Activated CD4-positive, alpha-beta memory T cell treated with anti-CD3 and anti-CD28 coated beads for 36 hours (primary cell): ENCODE measurements at regions of chr18 and their contacts with region 1.

Region 1: GRCh38 chr18:23452728-23453679 is at the start of gene RIOK3:
- DNase-seq: peak; percentile 97
- H3K4me3 Mint-ChIP-seq: peak within 1 kb of the TSS; percentile 98
- H3K27ac Mint-ChIP-seq: peak within 1 kb of the TSS; percentile 88
- H3K4me1 Mint-ChIP-seq: peaks cover 39% of the 10 kb centered on the region
- H3K27me3 Mint-ChIP-seq: peaks cover 2% of the 10 kb centered on the region
- total RNA-seq, gene RIOK3: 51.0 to 55.8 TPM

Region 2: DNA sequence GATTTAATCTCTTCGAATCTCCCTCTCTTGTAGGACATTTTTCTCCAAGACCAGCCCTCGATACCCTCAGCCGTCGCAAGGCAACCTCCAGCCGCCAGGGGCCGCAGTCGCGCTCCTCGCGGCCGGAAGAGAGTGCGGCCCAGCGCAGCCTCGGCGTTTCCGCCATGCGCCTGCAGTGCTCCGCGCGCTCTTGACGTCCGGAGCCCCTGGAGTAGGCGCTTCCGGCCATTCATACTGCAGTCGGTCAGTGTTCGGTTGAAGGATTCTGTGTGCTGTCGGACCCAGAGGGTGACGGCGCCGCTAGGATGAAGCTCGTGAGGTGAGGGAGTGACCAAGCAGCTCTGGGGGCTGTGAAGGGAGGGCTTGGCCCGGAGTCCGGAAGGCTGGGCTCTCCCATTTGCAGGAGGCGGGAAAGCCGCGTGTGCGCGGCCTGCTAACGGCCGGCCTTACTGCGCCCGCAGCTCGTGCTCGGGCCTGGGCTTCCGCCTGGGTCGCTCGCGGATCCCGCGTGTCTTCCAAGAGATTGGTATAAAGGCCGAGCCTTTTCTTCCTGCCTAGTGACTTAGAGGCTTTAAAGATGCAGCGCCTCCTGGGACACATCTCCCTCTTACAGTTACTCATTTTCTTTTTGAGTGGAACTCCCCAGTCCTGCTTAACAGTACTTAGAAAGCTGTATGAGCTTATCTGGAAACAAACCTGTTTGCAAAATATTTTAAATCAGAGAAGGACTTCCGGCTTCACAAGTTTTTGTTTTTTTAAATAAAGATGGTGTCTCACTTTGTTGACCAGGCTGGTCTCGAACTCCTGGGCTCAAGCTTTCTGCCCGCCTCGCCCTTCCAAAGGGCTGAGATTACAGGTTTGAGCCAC is 1840.6 kb before region 1 on chr18 and contains the start of gene SNRPD1:
- CTCF ChIA-PET with region 1: no interaction called
- POLR2A ChIA-PET with region 1: no interaction called
- intact Hi-C with region 1: loop called (anchors 5 kb)
- DNase-seq: peak; percentile 94
- H3K4me3 Mint-ChIP-seq: peak within 1 kb of the TSS; percentile 86
- H3K27ac Mint-ChIP-seq: peak within 1 kb of the TSS; percentile 94
- H3K4me1 Mint-ChIP-seq: peaks cover 31% of the 10 kb centered on the region
- H3K27me3 Mint-ChIP-seq: no peaks in the 10 kb centered on the region
- total RNA-seq, gene SNRPD1: 153 to 164 TPM

Region 3: DNA sequence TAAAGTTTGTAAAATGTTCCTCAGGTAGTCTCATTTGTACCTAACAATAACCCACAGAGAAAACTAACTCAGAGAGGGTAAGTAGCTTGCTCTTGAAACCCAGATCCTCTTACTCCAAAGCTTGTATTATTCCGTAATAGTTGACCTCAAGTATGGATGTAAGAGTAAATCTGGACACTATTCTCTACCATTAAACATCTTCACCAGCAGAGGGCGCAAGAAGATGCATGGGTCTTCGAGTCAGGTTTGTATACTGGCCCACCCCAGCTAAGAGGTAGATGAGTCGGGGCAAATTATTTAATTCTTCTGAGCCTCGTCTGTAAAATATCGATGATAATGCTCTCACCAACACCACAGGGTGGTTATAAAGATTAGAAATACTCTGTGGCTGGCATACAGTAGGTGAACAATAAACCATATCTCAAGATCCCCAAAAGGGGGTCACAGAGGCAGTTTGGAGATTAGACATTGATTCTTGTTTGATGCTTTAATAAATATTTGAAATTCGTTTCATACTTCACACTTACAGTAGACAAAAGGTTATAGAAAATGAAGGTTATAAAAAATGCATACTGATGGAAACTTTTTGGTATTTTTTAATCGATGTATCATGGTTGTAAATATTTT is 321.2 kb before region 1 on chr18:
- CTCF ChIA-PET with region 1: interaction called, 3 read pairs
- POLR2A ChIA-PET with region 1: no interaction called
- intact Hi-C with region 1: loop called (anchors 1 kb)
- DNase-seq: peak; percentile 55
- H3K4me3 Mint-ChIP-seq: peak overlapping the region; percentile 8
- H3K27ac Mint-ChIP-seq: no peak overlapping the region
- H3K4me1 Mint-ChIP-seq: peaks cover 14% of the 10 kb centered on the region
- H3K27me3 Mint-ChIP-seq: peaks cover 25% of the 10 kb centered on the region

Region 4: DNA sequence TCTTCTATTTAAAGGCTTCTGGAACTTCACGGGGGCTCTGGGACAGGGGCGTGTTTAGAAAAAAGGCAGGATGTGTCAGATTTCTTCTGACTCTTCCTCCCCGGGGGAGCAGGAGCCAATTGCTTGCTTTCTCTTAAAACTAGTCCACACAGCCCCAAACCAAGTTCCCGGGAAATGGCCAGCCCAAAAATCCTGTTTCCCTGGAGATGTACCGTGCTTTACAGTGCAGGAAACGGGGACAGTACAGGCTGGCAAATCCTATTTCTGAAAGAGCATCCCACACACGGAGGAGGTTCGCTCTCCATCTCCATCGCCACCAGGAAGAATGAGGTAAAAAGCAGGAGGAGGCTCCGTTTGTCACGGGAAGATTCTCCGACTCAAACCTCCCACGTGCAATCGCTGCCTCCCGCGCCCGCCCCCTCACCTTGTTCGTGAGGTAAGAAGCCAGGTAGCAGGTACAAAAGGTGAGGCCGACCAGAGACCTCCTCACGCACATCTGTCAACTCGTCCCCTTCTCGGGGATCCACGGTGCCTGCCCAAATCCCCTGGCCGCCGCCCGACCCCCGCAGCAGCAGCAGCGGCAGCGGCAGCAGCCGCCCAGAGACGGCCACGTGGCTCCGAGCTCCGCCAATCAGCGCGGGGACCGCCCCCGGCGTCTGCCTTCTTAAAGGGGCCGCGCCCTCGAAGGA is 15.5 kb before region 1 on chr18:
- CTCF ChIA-PET with region 1: interaction called, 3 read pairs
- POLR2A ChIA-PET with region 1: no interaction called
- intact Hi-C with region 1: loop called (anchors 1 kb)
- DNase-seq: peak; percentile 87
- H3K4me3 Mint-ChIP-seq: peak overlapping the region; percentile 90
- H3K27ac Mint-ChIP-seq: peak overlapping the region; percentile 18
- H3K4me1 Mint-ChIP-seq: peaks cover 17% of the 10 kb centered on the region
- H3K27me3 Mint-ChIP-seq: peaks cover 2% of the 10 kb centered on the region

Region 5: GRCh38 chr18:23586249-23587196 is 133.5 kb after region 1 on chr18 and contains the start of gene NPC1:
- CTCF ChIA-PET with region 1: no interaction called
- POLR2A ChIA-PET with region 1: no interaction called
- intact Hi-C with region 1: loop called (anchors 1 kb)
- DNase-seq: peak; percentile 94
- H3K4me3 Mint-ChIP-seq: peak within 1 kb of the TSS; percentile 95
- H3K27ac Mint-ChIP-seq: peak within 1 kb of the TSS; percentile 93
- H3K4me1 Mint-ChIP-seq: peaks cover 30% of the 10 kb centered on the region
- H3K27me3 Mint-ChIP-seq: peaks cover 3% of the 10 kb centered on the region
- total RNA-seq, gene NPC1: 39.3 to 39.9 TPM